Activated CD8-positive, alpha-beta memory T cell treated with anti-CD3 and anti-CD28 coated beads, Interleukin-2, amount 10 ng/mL, durations not matched to agents 7 days and 5 days (primary cell): ENCODE measurements at regions of chr4 and their contacts with region 1.

Region 1: DNA sequence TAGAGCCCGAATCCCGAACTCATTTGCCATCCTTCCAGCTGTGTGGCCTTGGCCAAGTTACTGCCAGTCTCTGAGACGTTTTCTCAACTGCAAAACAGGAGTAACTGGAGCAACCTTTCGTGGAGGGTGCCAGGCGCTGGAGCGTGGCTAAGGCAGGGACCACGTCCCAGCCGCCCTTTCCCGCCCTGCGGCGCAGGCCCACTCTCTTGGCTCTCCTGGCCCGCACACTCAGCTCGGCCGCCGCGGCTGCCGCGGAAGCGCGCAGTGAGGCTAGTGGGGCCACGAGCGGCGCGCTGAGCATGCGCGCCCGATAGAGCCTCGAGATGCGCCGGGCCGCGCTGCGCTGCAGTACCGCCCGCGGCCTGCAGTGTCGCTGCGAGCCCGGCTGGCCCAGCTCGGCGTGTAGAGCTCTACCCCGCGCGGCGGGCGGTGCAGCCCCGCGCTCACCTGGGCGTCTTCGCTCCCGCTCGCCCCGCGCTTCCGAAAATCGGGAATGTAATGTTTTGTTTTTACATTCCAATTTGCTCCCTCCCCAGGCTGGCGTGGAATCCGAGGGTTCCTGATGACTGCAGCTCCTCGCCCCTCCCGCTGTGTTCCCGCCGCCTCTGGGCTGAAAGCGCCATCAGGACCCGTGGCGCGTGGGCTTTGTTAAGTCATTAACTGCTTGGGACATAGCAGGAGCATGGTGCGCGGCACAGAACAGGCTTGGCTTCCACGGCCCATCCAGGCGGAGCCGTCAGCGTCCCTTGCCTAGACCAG is 4.0 kb upstream of the ZNF518B start:
- DNase-seq: peak; percentile 77
- ATAC-seq: peak; percentile 80
- H3K4me3 Mint-ChIP-seq: peak overlapping the region; percentile 66
- H3K27ac Mint-ChIP-seq: no peak overlapping the region
- H3K4me1 Mint-ChIP-seq: peaks cover 26% of the 10 kb centered on the region
- H3K27me3 Mint-ChIP-seq: peaks cover 41% of the 10 kb centered on the region

Region 2: DNA sequence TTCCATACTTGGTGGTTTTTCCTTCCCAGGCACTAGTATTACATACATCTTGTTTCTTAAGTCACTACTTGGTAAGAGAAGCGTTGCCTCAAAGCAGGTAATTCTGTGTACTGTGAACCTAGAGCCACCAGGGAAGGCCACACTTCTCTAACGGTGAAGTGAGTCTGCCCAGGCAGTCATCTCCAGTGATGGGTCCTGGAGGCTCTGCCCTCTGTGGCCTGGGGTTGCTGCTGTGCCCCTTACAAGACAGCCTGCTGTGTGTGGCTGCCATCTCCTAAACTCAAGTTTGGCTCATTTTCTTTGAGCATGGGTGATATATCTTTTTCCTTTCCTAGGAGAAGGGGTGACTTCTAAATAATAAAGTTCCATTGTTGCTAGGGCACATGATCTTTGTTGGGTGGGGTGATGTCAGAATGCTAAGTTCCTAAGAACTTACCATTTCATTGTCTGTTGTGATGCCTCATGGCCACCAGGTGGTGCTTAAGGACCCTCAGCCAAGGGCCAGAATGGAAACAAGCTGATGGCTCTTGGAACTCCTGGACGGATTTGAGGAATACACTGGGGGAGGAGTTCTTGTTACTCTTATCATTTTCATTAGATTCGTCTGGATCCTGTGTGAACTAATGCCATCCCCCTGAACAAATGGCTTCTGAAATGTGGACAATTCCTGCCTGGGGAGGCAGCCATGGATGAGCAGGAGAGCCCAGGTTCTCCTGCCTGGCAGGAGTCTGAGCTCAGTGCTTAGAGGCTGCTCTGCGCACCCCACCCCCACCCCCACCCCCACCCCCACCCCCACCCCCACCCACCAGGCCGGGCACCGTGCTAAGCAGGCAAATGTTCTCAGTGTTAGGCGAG is 303.6 kb before region 1 on chr4:
- CTCF ChIA-PET with region 1: interaction called, 30 read pairs
- DNase-seq: peak; percentile 60
- ATAC-seq: peak; percentile 60
- H3K4me3 Mint-ChIP-seq: no peak overlapping the region
- H3K27ac Mint-ChIP-seq: no peak overlapping the region
- H3K4me1 Mint-ChIP-seq: peaks cover 28% of the 10 kb centered on the region
- H3K27me3 Mint-ChIP-seq: peaks cover 5% of the 10 kb centered on the region

Region 3: GRCh38 chr4:10180927-10181782 is 280.1 kb before region 1 on chr4:
- CTCF ChIA-PET with region 1: interaction called, 11 read pairs
- DNase-seq: peak; percentile 78
- ATAC-seq: peak; percentile 88
- H3K4me3 Mint-ChIP-seq: peak overlapping the region; percentile 7
- H3K27ac Mint-ChIP-seq: peak overlapping the region; percentile 96
- H3K4me1 Mint-ChIP-seq: peaks cover 53% of the 10 kb centered on the region
- H3K27me3 Mint-ChIP-seq: no peaks in the 10 kb centered on the region

Region 4: GRCh38 chr4:10380735-10381134 is 80.5 kb before region 1 on chr4:
- CTCF ChIA-PET with region 1: no interaction called
- DNase-seq: no peak
- ATAC-seq: no peak
- H3K4me3 Mint-ChIP-seq: no peak overlapping the region
- H3K27ac Mint-ChIP-seq: no peak overlapping the region
- H3K4me1 Mint-ChIP-seq: no peaks in the 10 kb centered on the region
- H3K27me3 Mint-ChIP-seq: peaks cover 5% of the 10 kb centered on the region

Region 5: GRCh38 chr4:10413177-10413576 is 48.1 kb before region 1 on chr4:
- CTCF ChIA-PET with region 1: interaction called, 21 read pairs
- DNase-seq: no peak
- ATAC-seq: no peak
- H3K4me3 Mint-ChIP-seq: no peak overlapping the region
- H3K27ac Mint-ChIP-seq: no peak overlapping the region
- H3K4me1 Mint-ChIP-seq: peaks cover 24% of the 10 kb centered on the region
- H3K27me3 Mint-ChIP-seq: no peaks in the 10 kb centered on the region

Region 6: GRCh38 chr4:10535912-10536311 is 74.6 kb after region 1 on chr4:
- CTCF ChIA-PET with region 1: interaction called, 27 read pairs
- DNase-seq: no peak
- ATAC-seq: no peak
- H3K4me3 Mint-ChIP-seq: no peak overlapping the region
- H3K27ac Mint-ChIP-seq: no peak overlapping the region
- H3K4me1 Mint-ChIP-seq: peaks cover 1% of the 10 kb centered on the region
- H3K27me3 Mint-ChIP-seq: peaks cover 16% of the 10 kb centered on the region